ENCODE measurements at regions of chrX and their contacts with region 1.

Region 1: DNA sequence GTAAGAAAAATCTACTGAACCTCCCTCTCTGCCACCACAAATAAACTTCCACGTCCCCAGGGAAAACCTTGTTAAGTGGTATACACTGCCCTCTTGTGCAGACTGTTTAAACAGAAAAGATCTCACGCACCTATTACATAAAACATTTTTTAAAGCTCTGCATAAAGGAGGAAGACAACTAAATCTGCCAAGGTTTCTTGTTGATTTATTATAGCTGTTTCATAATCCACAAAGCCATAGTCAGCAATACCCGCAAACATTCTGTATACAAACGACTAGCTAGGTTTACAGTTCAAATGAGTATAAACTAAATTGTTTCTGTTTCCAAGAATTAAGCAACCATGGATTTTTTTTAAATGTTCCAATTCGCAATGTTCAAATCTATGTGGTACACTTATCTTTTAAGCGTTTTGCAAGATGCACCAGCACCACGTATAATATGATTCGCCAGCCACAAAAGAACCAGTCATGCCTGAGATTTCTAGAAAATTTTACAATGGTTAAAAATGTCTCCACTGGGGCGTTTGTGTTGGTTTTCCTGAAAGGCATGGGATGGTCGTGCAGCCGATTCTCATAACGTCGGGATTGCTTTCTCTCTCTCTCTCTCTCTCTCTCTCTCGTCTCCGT is 164.6 kb downstream of the PRKX start:
- DNase-seq: peak; percentile 79
- ATAC-seq: peak; percentile 87
- H3K4me3 ChIP-seq: peak overlapping the region; percentile 13; the same call in 1 of the 2 replicates
- H3K27ac ChIP-seq: peak overlapping the region; percentile 56; the same call in 1 of the 2 replicates
- H3K4me1 ChIP-seq: peaks cover 5% of the 10 kb centered on the region
- H3K27me3 ChIP-seq: no peaks in the 10 kb centered on the region
- CTCF ChIP-seq: peak; percentile 58
- POLR2A ChIP-seq: no peak
- RAD21 ChIP-seq: peak; percentile 66

Region 2: GRCh38 chrX:3184176-3184930 is 364.5 kb before region 1 on chrX:
- CTCF ChIA-PET with region 1: no interaction called
- POLR2A ChIA-PET with region 1: no interaction called
- dilution Hi-C with region 1: no loop called
- in situ Hi-C with region 1: no loop called
- intact Hi-C with region 1: loop called (anchors 1 kb)
- DNase-seq: peak; percentile 94
- ATAC-seq: peak; percentile 97
- H3K4me3 ChIP-seq: no peak overlapping the region
- H3K27ac ChIP-seq: peak overlapping the region; percentile 99
- H3K4me1 ChIP-seq: peaks cover 12% of the 10 kb centered on the region
- H3K27me3 ChIP-seq: no peaks in the 10 kb centered on the region
- CTCF ChIP-seq: no peak
- POLR2A ChIP-seq: no peak
- RAD21 ChIP-seq: no peak

Region 3: DNA sequence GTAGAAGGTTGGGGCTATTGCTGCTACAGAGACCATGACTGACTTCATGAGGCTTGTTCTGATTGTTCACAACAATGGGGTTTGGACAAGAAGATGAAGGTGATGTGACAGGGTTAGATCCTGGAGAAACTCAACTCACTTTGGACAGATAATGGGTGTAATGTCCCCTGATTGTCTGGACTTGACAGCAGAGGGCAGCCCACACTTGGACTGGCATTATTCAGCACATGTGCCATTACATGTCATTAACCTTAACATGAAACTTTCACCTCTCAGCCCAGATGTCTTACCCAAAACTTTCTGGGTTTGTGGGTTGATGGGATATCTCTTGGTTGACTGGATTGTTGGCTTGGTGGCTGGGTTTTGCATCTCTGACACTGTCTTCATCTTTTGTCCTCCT is 303.9 kb before region 1 on chrX:
- CTCF ChIA-PET with region 1: no interaction called
- POLR2A ChIA-PET with region 1: no interaction called
- dilution Hi-C with region 1: no loop called
- in situ Hi-C with region 1: no loop called
- intact Hi-C with region 1: loop called (anchors 1 kb)
- DNase-seq: no peak
- ATAC-seq: no peak
- H3K4me3 ChIP-seq: no peak overlapping the region
- H3K27ac ChIP-seq: peak overlapping the region; percentile 78
- H3K4me1 ChIP-seq: peaks cover 12% of the 10 kb centered on the region
- H3K27me3 ChIP-seq: no peaks in the 10 kb centered on the region
- CTCF ChIP-seq: no peak
- POLR2A ChIP-seq: no peak
- RAD21 ChIP-seq: no peak

Region 4: GRCh38 chrX:3345281-3346191 is 203.3 kb before region 1 on chrX:
- CTCF ChIA-PET with region 1: interaction called, 5 read pairs
- POLR2A ChIA-PET with region 1: no interaction called
- dilution Hi-C with region 1: no loop called
- in situ Hi-C with region 1: no loop called
- intact Hi-C with region 1: loop called (anchors 2 kb)
- DNase-seq: no peak
- ATAC-seq: peak; percentile 59
- H3K4me3 ChIP-seq: peak overlapping the region; percentile 39
- H3K27ac ChIP-seq: no peak overlapping the region
- H3K4me1 ChIP-seq: no peaks in the 10 kb centered on the region
- H3K27me3 ChIP-seq: peaks cover 16% of the 10 kb centered on the region
- CTCF ChIP-seq: no peak
- POLR2A ChIP-seq: no peak
- RAD21 ChIP-seq: no peak

Measured in IMR-90 (cell line).